ENCODE measurements at regions of chr4 and their contacts with region 1.

Region 1: GRCh38 chr4:72302981-72303704 is 265.9 kb downstream of the ADAMTS3 start:
- DNase-seq: peak; percentile 2 to 62 (median 12)
- ATAC-seq: peak; percentile 51
- H3K4me3 ChIP-seq: no peak overlapping the region
- H3K4me3 Mint-ChIP-seq: no peak overlapping the region
- H3K27ac ChIP-seq: no peak overlapping the region
- H3K27ac Mint-ChIP-seq: no peak overlapping the region
- H3K4me1 ChIP-seq: no peaks in the 10 kb centered on the region
- H3K4me1 Mint-ChIP-seq: no peaks in the 10 kb centered on the region
- H3K27me3 ChIP-seq: no peaks in the 10 kb centered on the region
- H3K27me3 Mint-ChIP-seq: no peaks in the 10 kb centered on the region
- CTCF ChIP-seq: peak; percentile 72

Region 2: DNA sequence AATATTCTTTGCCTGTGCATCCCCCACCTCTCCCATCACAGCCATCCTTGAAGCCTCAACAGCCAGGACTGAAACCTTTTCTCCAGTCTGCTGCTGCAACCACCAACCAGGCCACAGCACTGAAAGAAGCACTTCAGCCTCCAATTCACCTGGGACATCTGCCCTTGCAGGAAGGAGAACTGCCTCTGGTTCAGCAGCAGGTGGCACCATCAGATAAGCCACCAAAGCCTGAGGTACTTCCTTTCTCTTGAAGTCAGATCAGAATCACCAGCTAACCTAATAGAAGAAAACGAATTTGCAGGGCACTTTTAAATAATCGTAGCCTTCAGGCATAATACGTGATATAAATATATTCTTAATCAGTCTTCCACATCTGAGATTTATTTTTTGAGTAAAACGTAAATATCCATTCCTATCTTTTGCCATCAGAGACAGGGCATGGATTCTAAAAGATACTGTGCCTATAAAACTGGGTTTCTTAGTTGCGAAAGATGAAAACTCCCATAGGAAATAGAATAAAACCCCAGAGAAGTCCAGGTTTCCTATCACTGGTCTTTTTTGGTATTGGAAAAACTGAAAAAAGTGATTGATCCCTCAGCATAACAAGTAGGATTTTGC is 1701.6 kb before region 1 on chr4:
- CTCF ChIA-PET with region 1: interaction called, 5 read pairs
- POLR2A ChIA-PET with region 1: no interaction called
- intact Hi-C with region 1: loop called (anchors 1 to 2 kb)
- DNase-seq: peak; percentile 40 to 82 (median 55)
- ATAC-seq: peak; percentile 80
- H3K4me3 ChIP-seq: no peak overlapping the region
- H3K4me3 Mint-ChIP-seq: no peak overlapping the region
- H3K27ac ChIP-seq: no peak overlapping the region
- H3K27ac Mint-ChIP-seq: no peak overlapping the region
- H3K4me1 ChIP-seq: no peaks in the 10 kb centered on the region
- H3K4me1 Mint-ChIP-seq: no peaks in the 10 kb centered on the region
- H3K27me3 ChIP-seq: no peaks in the 10 kb centered on the region
- H3K27me3 Mint-ChIP-seq: peaks cover 4% of the 10 kb centered on the region
- CTCF ChIP-seq: peak; percentile 75

Region 3: GRCh38 chr4:70651864-70652506 is 1651.2 kb before region 1 on chr4:
- CTCF ChIA-PET with region 1: no interaction called
- POLR2A ChIA-PET with region 1: no interaction called
- intact Hi-C with region 1: loop called (anchors 1 to 5 kb)
- DNase-seq: peak in 4 of 14 experiments; percentile 4 to 56 (median 54)
- ATAC-seq: peak; percentile 56
- H3K4me3 ChIP-seq: no peak overlapping the region
- H3K4me3 Mint-ChIP-seq: no peak overlapping the region
- H3K27ac ChIP-seq: no peak overlapping the region
- H3K27ac Mint-ChIP-seq: no peak overlapping the region
- H3K4me1 ChIP-seq: no peaks in the 10 kb centered on the region
- H3K4me1 Mint-ChIP-seq: peaks cover 4% of the 10 kb centered on the region
- H3K27me3 ChIP-seq: no peaks in the 10 kb centered on the region
- H3K27me3 Mint-ChIP-seq: peaks cover 11% of the 10 kb centered on the region
- CTCF ChIP-seq: peak; percentile 71

Region 4: DNA sequence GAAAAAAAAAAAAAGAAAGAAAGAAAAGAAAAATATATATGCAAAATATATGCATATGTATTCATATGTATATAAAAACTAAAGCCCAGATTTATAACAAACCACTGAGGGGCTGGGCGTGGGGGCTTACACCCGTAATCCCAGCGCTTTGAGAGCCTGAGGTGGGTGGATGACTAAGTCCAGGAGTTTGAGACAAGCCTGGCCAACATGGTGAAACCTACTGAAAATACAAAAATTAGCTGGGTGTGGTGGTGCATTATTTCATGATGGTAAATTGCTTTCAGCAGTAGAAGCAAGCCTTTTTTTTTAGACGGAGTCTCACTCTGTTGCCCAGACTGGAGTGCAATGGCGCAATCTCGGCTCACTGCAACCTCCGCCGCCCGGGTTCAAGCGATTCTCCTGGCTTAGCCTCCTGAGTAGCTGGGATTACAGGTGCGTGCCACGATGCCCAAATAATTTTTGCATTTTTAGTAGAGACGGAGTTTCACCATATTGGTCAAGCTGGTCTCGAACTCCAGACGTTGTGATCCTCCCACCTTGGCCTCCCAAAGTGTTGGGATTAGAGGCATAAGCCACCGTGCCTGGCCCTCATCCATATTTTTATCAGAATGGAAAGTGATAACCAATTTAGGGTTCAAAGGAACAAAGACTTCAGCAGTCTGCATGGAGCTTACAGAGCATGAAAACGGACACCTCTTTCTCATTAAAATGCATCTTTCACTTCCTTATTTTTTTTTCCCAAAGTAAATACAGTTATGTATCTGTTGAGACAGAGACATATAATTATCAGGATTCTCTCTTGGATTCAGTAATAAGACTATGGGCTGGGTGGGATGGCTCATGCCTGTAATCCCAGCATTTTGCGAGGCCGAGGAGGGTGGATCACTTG is 1428.6 kb before region 1 on chr4:
- CTCF ChIA-PET with region 1: no interaction called
- POLR2A ChIA-PET with region 1: no interaction called
- intact Hi-C with region 1: loop called in 1 of 2 experiments (anchors 10 kb)
- DNase-seq: no peak
- ATAC-seq: no peak
- H3K4me3 ChIP-seq: no peak overlapping the region
- H3K4me3 Mint-ChIP-seq: no peak overlapping the region
- H3K27ac ChIP-seq: no peak overlapping the region
- H3K27ac Mint-ChIP-seq: no peak overlapping the region
- H3K4me1 ChIP-seq: no peaks in the 10 kb centered on the region
- H3K4me1 Mint-ChIP-seq: no peaks in the 10 kb centered on the region
- H3K27me3 ChIP-seq: no peaks in the 10 kb centered on the region
- H3K27me3 Mint-ChIP-seq: no peaks in the 10 kb centered on the region
- CTCF ChIP-seq: no peak

Region 5: DNA sequence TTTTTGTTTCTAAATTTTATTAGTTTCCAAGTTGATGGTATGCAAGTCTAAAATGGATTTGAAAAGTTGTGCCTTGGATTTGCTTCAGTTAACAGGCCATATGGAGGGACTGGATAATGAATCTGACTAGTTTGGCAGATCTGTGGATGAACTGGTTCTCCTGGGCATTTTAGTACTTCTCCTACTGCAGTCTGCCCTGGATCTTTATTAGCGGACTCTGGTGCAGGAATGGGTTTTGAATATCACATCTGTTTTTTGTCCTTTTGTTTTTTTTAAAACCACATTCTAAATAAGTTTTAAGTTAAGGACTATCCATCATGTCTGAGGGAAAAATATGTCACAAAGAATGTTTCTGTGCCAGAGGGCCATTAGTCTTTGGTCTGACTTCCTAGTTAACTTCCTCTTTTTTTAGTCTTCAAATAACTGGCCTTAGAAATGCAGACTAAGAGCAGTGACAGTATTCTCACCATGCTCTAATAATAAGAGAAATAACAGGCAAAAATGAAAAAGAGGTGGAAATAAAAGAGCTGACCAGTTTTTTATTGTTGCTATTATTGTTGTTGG is 1323.6 kb before region 1 on chr4:
- CTCF ChIA-PET with region 1: no interaction called
- POLR2A ChIA-PET with region 1: no interaction called
- intact Hi-C with region 1: loop called in 1 of 2 experiments (anchors 10 kb)
- DNase-seq: no peak
- ATAC-seq: no peak
- H3K4me3 ChIP-seq: no peak overlapping the region
- H3K4me3 Mint-ChIP-seq: no peak overlapping the region
- H3K27ac ChIP-seq: no peak overlapping the region
- H3K27ac Mint-ChIP-seq: no peak overlapping the region
- H3K4me1 ChIP-seq: no peaks in the 10 kb centered on the region
- H3K4me1 Mint-ChIP-seq: no peaks in the 10 kb centered on the region
- H3K27me3 ChIP-seq: no peaks in the 10 kb centered on the region
- H3K27me3 Mint-ChIP-seq: no peaks in the 10 kb centered on the region
- CTCF ChIP-seq: no peak

Region 6: DNA sequence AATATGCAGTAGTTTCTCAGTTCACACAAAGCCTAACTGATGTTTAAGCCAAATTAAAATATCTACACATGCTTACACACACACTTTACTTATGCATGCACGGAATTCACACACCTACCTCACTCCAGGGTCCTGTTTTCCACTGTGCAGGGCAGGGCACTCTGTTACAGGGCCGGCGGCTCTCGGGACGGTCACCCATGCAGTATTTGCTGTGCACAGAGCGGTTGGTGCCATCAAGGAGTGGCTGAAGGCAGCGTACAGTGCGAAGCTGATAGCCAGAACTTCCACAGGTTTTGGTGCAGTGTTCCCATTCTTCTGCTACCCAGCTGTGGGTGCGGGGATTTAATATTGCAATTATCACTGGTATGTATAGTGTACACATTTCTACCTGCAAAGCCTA is 12.4 kb before region 1 on chr4:
- CTCF ChIA-PET with region 1: no interaction called
- POLR2A ChIA-PET with region 1: no interaction called
- intact Hi-C with region 1: no loop called
- DNase-seq: no peak
- ATAC-seq: no peak
- H3K4me3 ChIP-seq: no peak overlapping the region
- H3K4me3 Mint-ChIP-seq: no peak overlapping the region
- H3K27ac ChIP-seq: no peak overlapping the region
- H3K27ac Mint-ChIP-seq: no peak overlapping the region
- H3K4me1 ChIP-seq: no peaks in the 10 kb centered on the region
- H3K4me1 Mint-ChIP-seq: no peaks in the 10 kb centered on the region
- H3K27me3 ChIP-seq: no peaks in the 10 kb centered on the region
- H3K27me3 Mint-ChIP-seq: peaks cover 7% of the 10 kb centered on the region
- CTCF ChIP-seq: no peak